ENCODE measurements at regions of chr15 and their contacts with region 1.

Region 1: GRCh38 chr15:72722071-72722696 is 36.2 kb downstream of the BBS4 start:
- DNase-seq: peak; percentile 85
- ATAC-seq: peak; percentile 42
- H3K4me3 Mint-ChIP-seq: no peak overlapping the region
- H3K27ac Mint-ChIP-seq: no peak overlapping the region
- H3K4me1 Mint-ChIP-seq: no peaks in the 10 kb centered on the region
- H3K27me3 Mint-ChIP-seq: no peaks in the 10 kb centered on the region

Region 2: DNA sequence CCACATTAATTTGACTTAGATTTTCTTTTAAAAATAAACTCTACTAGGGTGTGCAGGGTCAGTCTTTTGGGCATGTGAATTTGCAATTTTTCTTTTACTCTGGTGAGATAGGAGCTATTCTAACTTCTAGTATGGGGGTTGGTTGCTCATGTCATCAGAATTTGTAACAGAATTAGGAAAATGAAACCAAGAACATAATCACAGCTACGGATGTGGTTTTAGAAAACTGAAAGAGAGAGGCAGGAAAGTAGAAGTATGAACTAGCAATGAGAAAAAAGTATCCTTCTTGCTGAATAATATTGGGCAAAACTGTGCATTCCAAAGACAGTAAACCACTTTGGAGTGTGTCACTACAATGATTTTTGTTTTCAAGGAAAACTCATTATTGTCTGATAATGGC is 18.0 kb after region 1 on chr15:
- CTCF ChIA-PET with region 1: interaction called, 26 read pairs
- POLR2A ChIA-PET with region 1: no interaction called
- intact Hi-C with region 1: no loop called
- DNase-seq: no peak
- ATAC-seq: peak; percentile 92
- H3K4me3 Mint-ChIP-seq: peak overlapping the region; percentile 13
- H3K27ac Mint-ChIP-seq: peak overlapping the region; percentile 79
- H3K4me1 Mint-ChIP-seq: peaks cover 34% of the 10 kb centered on the region
- H3K27me3 Mint-ChIP-seq: no peaks in the 10 kb centered on the region

Region 3: DNA sequence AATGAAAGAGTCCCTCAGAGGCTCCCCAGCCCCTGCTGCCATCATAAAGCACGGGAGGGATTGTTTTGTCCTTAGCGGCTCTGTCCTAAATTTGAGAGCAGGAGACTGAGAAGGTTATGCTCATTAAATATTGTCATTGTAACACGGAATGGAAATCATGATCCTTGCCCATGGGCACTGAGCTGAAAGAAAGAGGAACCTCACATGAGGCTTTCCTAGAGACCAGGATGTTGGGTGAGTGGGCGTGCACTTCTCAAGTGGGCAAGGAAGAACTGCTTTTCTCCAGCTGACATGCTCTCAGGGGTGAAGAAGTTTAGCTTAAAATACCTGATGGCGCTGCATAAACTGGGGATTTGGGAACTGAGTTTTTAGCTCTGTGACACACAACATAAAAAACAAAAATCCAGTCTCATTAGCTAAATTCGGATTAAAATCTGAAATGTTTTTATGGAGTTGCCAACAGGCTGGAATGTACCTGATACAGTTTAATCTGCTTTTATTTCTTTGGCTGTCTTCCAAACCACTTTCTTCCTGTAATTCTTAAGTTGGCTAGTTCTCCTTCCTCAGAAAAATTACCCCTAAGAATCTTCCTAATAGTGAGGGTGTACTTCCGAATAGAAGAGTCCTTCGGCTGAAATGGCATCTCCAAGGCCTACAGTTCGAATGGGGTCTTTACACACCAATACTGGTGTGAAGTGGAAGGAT is 29.7 kb after region 1 on chr15:
- CTCF ChIA-PET with region 1: interaction called, 23 read pairs
- POLR2A ChIA-PET with region 1: no interaction called
- intact Hi-C with region 1: no loop called
- DNase-seq: no peak
- ATAC-seq: no peak
- H3K4me3 Mint-ChIP-seq: no peak overlapping the region
- H3K27ac Mint-ChIP-seq: peak overlapping the region; percentile 33
- H3K4me1 Mint-ChIP-seq: peaks cover 34% of the 10 kb centered on the region
- H3K27me3 Mint-ChIP-seq: no peaks in the 10 kb centered on the region

Region 4: DNA sequence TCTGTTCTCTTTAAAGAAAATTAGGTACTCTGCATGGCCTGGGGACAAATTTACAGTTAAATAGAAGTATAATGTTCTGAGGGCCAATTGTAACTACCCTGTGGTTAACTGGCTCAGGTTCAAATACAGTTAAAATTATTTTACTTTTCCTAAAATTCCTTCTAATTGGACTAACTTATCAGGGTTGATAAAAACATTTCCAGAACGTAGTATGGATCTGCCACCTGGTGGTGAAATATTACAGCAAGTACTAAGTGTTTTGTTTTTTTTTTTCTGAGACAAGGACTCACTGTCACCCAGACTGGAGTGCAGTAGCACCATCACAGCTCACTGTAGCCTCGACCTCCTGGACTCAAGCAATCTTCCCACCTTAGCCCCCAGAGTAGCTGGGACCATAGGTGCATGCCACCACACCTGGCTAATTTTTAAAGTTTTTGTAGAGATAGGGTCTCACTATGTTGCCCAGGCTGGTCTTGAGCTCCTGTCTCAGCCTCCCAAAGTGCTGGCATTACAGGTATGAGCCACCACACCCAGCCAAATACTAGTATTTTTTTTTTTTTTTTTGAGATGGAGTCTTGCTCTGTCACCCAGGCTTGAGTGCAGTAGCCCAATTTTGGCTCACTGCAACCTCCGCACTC is 359.3 kb after region 1 on chr15:
- CTCF ChIA-PET with region 1: interaction called, 42 read pairs
- POLR2A ChIA-PET with region 1: no interaction called
- intact Hi-C with region 1: loop called (anchors 1 kb)
- DNase-seq: peak; percentile 8
- ATAC-seq: no peak
- H3K4me3 Mint-ChIP-seq: no peak overlapping the region
- H3K27ac Mint-ChIP-seq: no peak overlapping the region
- H3K4me1 Mint-ChIP-seq: no peaks in the 10 kb centered on the region
- H3K27me3 Mint-ChIP-seq: no peaks in the 10 kb centered on the region

Region 5: DNA sequence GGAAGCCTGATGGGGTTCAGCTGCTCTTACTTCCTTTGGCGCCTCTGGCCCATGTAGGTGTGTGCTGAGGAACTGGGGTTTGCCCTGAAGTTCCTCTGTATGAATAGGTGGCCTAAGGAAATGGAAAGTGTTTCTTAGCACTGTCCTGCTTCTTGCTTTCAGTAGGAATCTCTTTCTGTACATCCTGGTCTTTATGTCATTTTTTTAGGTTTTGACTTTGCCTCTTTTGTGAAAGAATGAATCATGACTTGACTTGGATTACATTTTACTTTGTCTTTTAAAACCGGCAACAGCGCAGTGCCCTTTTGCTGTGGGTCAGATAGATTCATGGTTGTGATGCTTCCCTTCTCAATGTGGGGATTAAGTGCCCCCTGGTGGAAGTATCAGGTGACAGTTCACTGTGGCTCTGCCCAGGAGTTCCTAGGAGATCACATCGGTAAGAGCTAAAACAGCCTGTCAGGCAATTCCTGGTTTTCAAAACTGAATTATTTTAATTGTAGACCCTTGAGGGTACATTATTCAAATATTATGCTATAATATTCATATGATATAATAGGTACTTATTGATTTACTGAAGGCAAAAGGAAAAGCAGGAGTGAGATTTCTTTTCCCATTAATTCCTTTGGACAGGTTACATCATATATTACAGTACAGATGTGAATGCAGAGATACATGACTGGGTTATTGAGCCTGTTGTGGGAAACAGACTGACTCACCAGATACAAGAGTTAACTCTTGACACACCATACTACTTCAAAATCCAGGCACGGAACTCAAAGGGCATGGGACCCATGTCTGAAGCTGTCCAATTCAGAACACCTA is 551.2 kb after region 1 on chr15:
- CTCF ChIA-PET with region 1: interaction called, 6 read pairs
- POLR2A ChIA-PET with region 1: no interaction called
- intact Hi-C with region 1: loop called in 1 of 2 experiments (anchors 5 kb)
- DNase-seq: peak; percentile 64
- ATAC-seq: peak; percentile 90
- H3K4me3 Mint-ChIP-seq: no peak overlapping the region
- H3K27ac Mint-ChIP-seq: no peak overlapping the region
- H3K4me1 Mint-ChIP-seq: peaks cover 4% of the 10 kb centered on the region
- H3K27me3 Mint-ChIP-seq: no peaks in the 10 kb centered on the region

Measured in activated CD4-positive, alpha-beta T cell treated with anti-CD3 and anti-CD28 coated beads for 36 hours (primary cell).